ENCODE measurements at regions of chr13 and their contacts with region 1.

Region 1: DNA sequence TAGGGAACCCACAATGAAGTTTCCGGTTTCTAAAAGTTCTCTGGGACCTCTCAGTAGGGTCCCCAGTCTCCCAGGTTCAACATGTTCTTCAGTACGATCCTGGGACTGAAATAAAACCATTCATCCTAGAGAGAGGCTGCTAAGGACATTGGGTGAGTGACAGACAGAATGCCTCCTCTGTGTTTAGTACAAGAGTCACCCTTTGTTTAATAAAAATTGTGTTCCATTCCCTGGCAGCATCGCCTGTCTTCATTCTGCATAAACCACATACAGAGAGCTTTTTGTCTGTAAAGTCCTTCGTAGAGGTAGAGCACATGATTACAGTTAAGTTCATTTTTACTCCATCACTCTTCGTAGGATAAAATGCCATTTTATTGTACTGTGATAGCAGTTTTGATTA is 95.3 kb upstream of the GPR12 start:
- DNase-seq: no peak
- ATAC-seq: no peak
- H3K4me3 ChIP-seq: no peak overlapping the region
- H3K4me3 Mint-ChIP-seq: no peak overlapping the region
- H3K27ac ChIP-seq: no peak overlapping the region
- H3K27ac Mint-ChIP-seq: no peak overlapping the region
- H3K4me1 ChIP-seq: no peaks in the 10 kb centered on the region
- H3K4me1 Mint-ChIP-seq: no peaks in the 10 kb centered on the region
- H3K27me3 ChIP-seq: peaks cover 0 to 18% of the 10 kb centered on the region in 2 experiments
- H3K27me3 Mint-ChIP-seq: peaks cover 39% of the 10 kb centered on the region in 2 donors

Region 2: GRCh38 chr13:26881178-26881577 is 25.3 kb after region 1 on chr13:
- CTCF ChIA-PET with region 1: interaction called in 1 of 2 experiments, 10 read pairs
- POLR2A ChIA-PET with region 1: no interaction called
- DNase-seq: no peak
- ATAC-seq: no peak
- H3K4me3 ChIP-seq: no peak overlapping the region
- H3K4me3 Mint-ChIP-seq: no peak overlapping the region
- H3K27ac ChIP-seq: no peak overlapping the region
- H3K27ac Mint-ChIP-seq: no peak overlapping the region
- H3K4me1 ChIP-seq: no peaks in the 10 kb centered on the region
- H3K4me1 Mint-ChIP-seq: no peaks in the 10 kb centered on the region
- H3K27me3 ChIP-seq: peaks cover 0 to 20% of the 10 kb centered on the region in 2 experiments
- H3K27me3 Mint-ChIP-seq: peaks cover 11 to 16% of the 10 kb centered on the region in 2 donors

Region 3: GRCh38 chr13:28313579-28313978 is 1457.7 kb after region 1 on chr13:
- CTCF ChIA-PET with region 1: no interaction called
- POLR2A ChIA-PET with region 1: no interaction called
- DNase-seq: peak in 1 of 35 experiments; percentile 11
- ATAC-seq: no peak
- H3K4me3 ChIP-seq: no peak overlapping the region
- H3K4me3 Mint-ChIP-seq: no peak overlapping the region
- H3K27ac ChIP-seq: no peak overlapping the region
- H3K27ac Mint-ChIP-seq: no peak overlapping the region
- H3K4me1 ChIP-seq: peaks cover 0 to 2% of the 10 kb centered on the region in 2 experiments
- H3K4me1 Mint-ChIP-seq: no peaks in the 10 kb centered on the region
- H3K27me3 ChIP-seq: peaks cover 0 to 2% of the 10 kb centered on the region in 2 experiments
- H3K27me3 Mint-ChIP-seq: no peaks in the 10 kb centered on the region

Measured in T-cell (primary cell).